Naive thymus-derived CD4-positive, alpha-beta T cell (primary cell): ENCODE measurements at regions of chr10 and their contacts with region 1.

Region 1: GRCh38 chr10:101031128-101031795 is at the starts of genes PDZD7 and SFXN3:
- DNase-seq: peak; percentile 93 to 98 (median 97)
- ATAC-seq: peak; percentile 88
- H3K4me3 ChIP-seq: peak within 1 kb of the TSS; percentile 99
- H3K4me3 Mint-ChIP-seq: peak within 1 kb of the TSS; percentile 85 to 99 (median 94)
- H3K27ac ChIP-seq: peak within 1 kb of the TSS; percentile 98
- H3K27ac Mint-ChIP-seq: peak within 1 kb of the TSS; percentile 75 to 97 (median 93)
- H3K4me1 ChIP-seq: peaks cover 12 to 14% of the 10 kb centered on the region in 2 donors
- H3K4me1 Mint-ChIP-seq: peaks cover 6 to 21% (median 16%) of the 10 kb centered on the region in 7 donors
- H3K27me3 ChIP-seq: no peaks in the 10 kb centered on the region
- H3K27me3 Mint-ChIP-seq: peaks cover 0 to 21% (median 0%) of the 10 kb centered on the region in 5 donors
- total RNA-seq, gene PDZD7: 0.65 to 2.8 (median 1.8) TPM
- total RNA-seq, gene SFXN3: 33.7 to 90.4 (median 48.4) TPM

Region 2: DNA sequence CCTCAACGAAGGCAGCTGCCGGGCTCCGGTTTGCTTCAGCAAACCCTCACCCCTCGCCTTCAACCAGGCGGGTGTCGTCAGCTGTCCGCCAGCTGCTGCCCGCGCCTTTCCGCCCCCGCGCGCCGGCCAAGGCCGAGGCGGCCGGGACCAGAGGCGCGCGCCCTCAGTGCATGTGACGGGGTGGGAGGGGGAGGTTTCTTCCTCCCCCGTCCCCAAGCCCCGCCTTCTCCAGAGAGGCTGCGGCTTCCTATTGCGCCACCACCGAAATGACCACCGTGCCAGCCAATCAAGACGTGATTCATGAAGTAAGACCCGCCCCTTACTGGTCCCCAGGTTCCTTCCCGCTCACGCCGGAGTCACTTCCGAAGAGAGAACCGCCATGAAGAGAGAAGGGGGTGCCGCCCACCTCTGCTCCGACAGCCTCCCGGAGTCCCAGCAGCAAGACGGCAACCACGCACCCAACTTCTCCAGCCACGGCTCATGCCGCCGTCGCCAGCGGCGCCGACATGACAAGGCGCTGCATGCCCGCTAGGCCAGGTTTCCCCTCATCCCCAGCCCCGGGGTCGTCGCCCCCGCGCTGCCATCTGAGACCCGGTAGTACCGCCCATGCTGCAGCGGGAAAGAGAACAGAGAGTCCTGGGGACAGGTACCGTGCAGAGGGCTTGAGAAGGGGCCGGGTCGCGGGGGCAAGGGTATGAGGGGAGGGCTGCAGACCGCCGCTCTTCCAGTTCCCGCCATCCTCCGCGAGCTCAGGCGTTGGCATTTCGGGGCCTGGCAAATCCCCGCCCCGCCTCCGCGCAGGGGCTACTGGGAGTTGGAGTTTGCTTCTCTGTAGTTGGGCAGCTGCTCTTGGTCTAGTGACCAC is 118.4 kb before region 1 on chr10 and contains the start of gene SLF2:
- CTCF ChIA-PET with region 1: no interaction called
- POLR2A ChIA-PET with region 1: interaction called, 4 read pairs
- intact Hi-C with region 1: loop called (anchors 1 to 5 kb)
- DNase-seq: peak; percentile 69 to 91 (median 88)
- ATAC-seq: peak; percentile 96
- H3K4me3 ChIP-seq: peak within 1 kb of the TSS; percentile 96
- H3K4me3 Mint-ChIP-seq: peak within 1 kb of the TSS; percentile 91 to 100 (median 99)
- H3K27ac ChIP-seq: peak within 1 kb of the TSS; percentile 89
- H3K27ac Mint-ChIP-seq: peak within 1 kb of the TSS; percentile 88 to 99 (median 97)
- H3K4me1 ChIP-seq: peaks cover 12 to 13% of the 10 kb centered on the region in 2 donors
- H3K4me1 Mint-ChIP-seq: peaks cover 22 to 63% (median 60%) of the 10 kb centered on the region in 7 donors
- H3K27me3 ChIP-seq: no peaks in the 10 kb centered on the region
- H3K27me3 Mint-ChIP-seq: no peaks in the 10 kb centered on the region
- total RNA-seq, gene SLF2: 20.1 to 43.7 (median 38.8) TPM

Region 3: DNA sequence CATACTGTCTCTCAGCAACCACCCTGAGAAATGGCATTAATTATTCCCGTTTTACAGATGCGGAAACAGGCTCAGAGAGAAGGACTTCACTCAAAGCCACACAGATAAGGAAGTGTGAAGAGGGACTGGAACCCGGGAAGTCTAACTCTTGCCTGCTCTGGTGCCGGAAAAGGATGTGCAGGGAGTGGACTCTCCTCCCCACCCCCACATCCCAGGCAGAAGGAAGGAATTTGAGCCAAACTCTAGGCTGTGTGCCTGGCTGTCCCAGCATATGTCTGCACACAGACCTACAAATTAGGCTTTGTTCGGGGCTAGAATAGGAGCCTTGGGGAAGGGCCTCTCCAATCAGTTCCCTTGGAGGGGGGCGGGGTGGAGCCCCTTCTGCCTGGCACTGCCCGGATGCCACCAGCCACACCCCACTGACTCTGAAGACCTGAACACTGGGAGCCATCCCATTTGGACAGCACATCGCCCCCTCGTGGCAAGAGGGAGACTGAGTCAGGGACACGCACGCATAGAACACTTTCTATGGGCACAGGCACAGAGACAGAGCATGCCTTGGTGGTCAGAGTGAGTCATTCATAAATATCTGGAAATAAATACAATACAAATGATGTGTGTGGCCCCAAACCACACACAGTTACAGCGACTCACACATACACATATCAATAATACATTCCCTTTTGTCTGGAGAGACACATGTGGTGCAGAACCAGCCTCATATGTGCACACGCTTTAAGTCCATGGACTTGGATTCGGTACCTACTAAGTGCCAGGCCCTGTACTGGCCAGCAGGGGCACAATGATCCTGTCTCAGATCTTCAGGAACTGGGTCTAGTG is 18.5 kb before region 1 on chr10:
- CTCF ChIA-PET with region 1: interaction called, 11 read pairs
- POLR2A ChIA-PET with region 1: interaction called, 3 read pairs
- intact Hi-C with region 1: loop called (anchors 1 kb)
- DNase-seq: peak; percentile 46 to 76 (median 63)
- ATAC-seq: peak; percentile 91
- H3K4me3 ChIP-seq: no peak overlapping the region
- H3K4me3 Mint-ChIP-seq: peak overlapping the region in 1 of 10 donors; percentile 24
- H3K27ac ChIP-seq: no peak overlapping the region
- H3K27ac Mint-ChIP-seq: peak overlapping the region in 3 of 9 donors; percentile 8 to 75 (median 41)
- H3K4me1 ChIP-seq: peaks cover 0 to 5% of the 10 kb centered on the region in 2 donors
- H3K4me1 Mint-ChIP-seq: peaks cover 9 to 21% (median 17%) of the 10 kb centered on the region in 7 donors
- H3K27me3 ChIP-seq: no peaks in the 10 kb centered on the region
- H3K27me3 Mint-ChIP-seq: peaks cover 22 to 39% (median 30%) of the 10 kb centered on the region in 5 donors

Region 4: GRCh38 chr10:101042667-101043355 is 11.5 kb after region 1 on chr10:
- CTCF ChIA-PET with region 1: interaction called, 30 read pairs
- POLR2A ChIA-PET with region 1: interaction called, 40 read pairs
- intact Hi-C with region 1: loop called (anchors 1 kb)
- DNase-seq: peak; percentile 49 to 86 (median 57)
- ATAC-seq: peak; percentile 87
- H3K4me3 ChIP-seq: peak overlapping the region; percentile 82
- H3K4me3 Mint-ChIP-seq: peak overlapping the region; percentile 86 to 99 (median 94)
- H3K27ac ChIP-seq: peak overlapping the region; percentile 67
- H3K27ac Mint-ChIP-seq: peak overlapping the region; percentile 81 to 96 (median 88)
- H3K4me1 ChIP-seq: peaks cover 5 to 14% of the 10 kb centered on the region in 2 donors
- H3K4me1 Mint-ChIP-seq: peaks cover 20 to 27% (median 24%) of the 10 kb centered on the region in 7 donors
- H3K27me3 ChIP-seq: no peaks in the 10 kb centered on the region
- H3K27me3 Mint-ChIP-seq: peaks cover 10 to 44% (median 21%) of the 10 kb centered on the region in 5 donors

Region 5: DNA sequence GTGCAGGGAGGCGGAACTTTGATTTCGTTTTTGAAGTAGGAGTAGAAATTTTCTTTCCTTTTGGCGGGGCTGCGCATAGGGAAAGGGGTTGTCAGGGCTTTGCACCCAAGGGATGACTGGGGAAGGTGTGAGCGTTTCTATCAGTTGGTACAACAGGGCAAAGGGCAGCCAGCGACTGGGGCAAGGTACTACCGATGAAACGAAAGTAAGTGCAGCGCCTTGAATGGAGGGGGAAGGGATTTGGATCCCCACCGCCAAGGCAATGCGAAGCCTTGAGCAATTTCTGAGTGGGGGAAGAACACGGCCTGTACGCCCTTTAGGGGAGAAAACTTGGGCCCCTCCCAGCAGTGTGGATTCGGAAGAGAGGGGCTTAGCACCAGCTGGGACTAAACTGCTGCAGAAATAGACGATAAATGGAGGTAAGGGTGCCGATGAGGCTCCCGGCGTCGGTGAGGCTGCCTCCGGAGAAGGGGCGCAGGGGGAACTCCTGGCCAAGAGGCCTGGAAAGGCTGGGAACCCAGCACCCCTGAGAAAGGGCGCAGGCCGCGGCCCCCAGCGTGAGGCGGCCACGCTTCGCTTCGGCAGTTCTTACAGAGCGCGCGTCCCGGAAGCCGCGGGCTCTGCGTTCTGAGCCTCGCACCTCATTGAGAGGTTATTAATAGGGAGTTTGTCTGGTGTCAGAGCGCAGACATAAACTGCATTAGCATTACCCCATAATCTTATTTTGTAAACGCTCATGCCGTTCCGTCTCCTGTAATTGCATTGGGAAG is 89.8 kb after region 1 on chr10:
- CTCF ChIA-PET with region 1: interaction called, 4 read pairs
- POLR2A ChIA-PET with region 1: no interaction called
- intact Hi-C with region 1: loop called in 1 of 2 experiments (anchors 5 kb)
- DNase-seq: peak in 8 of 9 donors; percentile 35 to 58 (median 47)
- ATAC-seq: peak; percentile 84
- H3K4me3 ChIP-seq: peak overlapping the region; percentile 87
- H3K4me3 Mint-ChIP-seq: peak overlapping the region; percentile 88 to 100 (median 96)
- H3K27ac ChIP-seq: peak overlapping the region; percentile 55
- H3K27ac Mint-ChIP-seq: peak overlapping the region; percentile 83 to 97 (median 90)
- H3K4me1 ChIP-seq: peaks cover 6 to 21% of the 10 kb centered on the region in 2 donors
- H3K4me1 Mint-ChIP-seq: peaks cover 21 to 32% (median 30%) of the 10 kb centered on the region in 7 donors
- H3K27me3 ChIP-seq: no peaks in the 10 kb centered on the region
- H3K27me3 Mint-ChIP-seq: peaks cover 41 to 86% (median 47%) of the 10 kb centered on the region in 5 donors

Region 6: GRCh38 chr10:101161494-101162299 is 130.4 kb after region 1 on chr10:
- CTCF ChIA-PET with region 1: no interaction called
- POLR2A ChIA-PET with region 1: no interaction called
- intact Hi-C with region 1: no loop called
- DNase-seq: peak; percentile 45 to 71 (median 65)
- ATAC-seq: peak; percentile 96
- H3K4me3 ChIP-seq: no peak overlapping the region
- H3K4me3 Mint-ChIP-seq: peak overlapping the region in 5 of 10 donors; percentile 20 to 51 (median 30)
- H3K27ac ChIP-seq: no peak overlapping the region
- H3K27ac Mint-ChIP-seq: peak overlapping the region in 1 of 9 donors; percentile 26
- H3K4me1 ChIP-seq: no peaks in the 10 kb centered on the region
- H3K4me1 Mint-ChIP-seq: peaks cover 9 to 16% (median 12%) of the 10 kb centered on the region in 7 donors
- H3K27me3 ChIP-seq: peaks cover 6 to 15% of the 10 kb centered on the region in 2 donors
- H3K27me3 Mint-ChIP-seq: peaks cover 49 to 78% (median 70%) of the 10 kb centered on the region in 5 donors

Region 7: DNA sequence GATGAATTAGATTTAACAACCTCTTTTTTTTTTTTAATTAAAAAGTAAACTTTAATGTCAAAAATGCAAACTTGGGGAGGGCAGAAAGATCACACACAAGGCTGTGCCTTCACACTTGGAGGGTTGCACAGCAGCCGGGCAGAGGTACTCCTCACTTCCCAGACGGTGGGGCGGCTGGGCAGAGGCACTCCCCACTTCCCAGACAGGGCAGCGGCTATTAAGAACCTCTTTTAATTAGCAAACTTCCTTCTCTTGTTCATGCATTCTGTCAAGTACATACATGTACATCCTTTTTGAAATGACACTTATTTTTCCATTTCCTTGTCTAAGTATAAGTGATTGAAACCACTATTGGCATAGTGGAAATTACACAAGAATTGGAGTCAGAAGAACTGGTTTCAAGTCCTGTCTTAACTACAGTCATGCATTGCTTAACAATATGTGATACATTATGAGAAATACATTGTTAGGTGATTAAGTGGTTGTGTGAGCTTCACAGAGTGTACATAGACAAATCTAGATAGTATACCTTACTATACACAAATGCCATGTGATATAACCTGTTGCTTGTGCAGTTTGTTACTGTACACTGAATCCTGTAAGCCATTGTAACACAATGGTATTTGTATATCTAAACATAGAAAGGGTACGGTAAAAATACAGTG is 349.2 kb after region 1 on chr10:
- CTCF ChIA-PET with region 1: no interaction called
- POLR2A ChIA-PET with region 1: no interaction called
- intact Hi-C with region 1: no loop called
- DNase-seq: no peak
- ATAC-seq: no peak
- H3K4me3 ChIP-seq: no peak overlapping the region
- H3K4me3 Mint-ChIP-seq: no peak overlapping the region
- H3K27ac ChIP-seq: no peak overlapping the region
- H3K27ac Mint-ChIP-seq: no peak overlapping the region
- H3K4me1 ChIP-seq: no peaks in the 10 kb centered on the region
- H3K4me1 Mint-ChIP-seq: peaks cover 6 to 48% (median 30%) of the 10 kb centered on the region in 7 donors
- H3K27me3 ChIP-seq: no peaks in the 10 kb centered on the region
- H3K27me3 Mint-ChIP-seq: no peaks in the 10 kb centered on the region

Region 8: GRCh38 chr10:102055647-102056419 is 1024.6 kb after region 1 on chr10 and contains the start of gene ARMH3:
- CTCF ChIA-PET with region 1: no interaction called
- POLR2A ChIA-PET with region 1: no interaction called
- intact Hi-C with region 1: loop called in 1 of 2 experiments (anchors 10 kb)
- DNase-seq: peak; percentile 72 to 90 (median 87)
- ATAC-seq: peak; percentile 98
- H3K4me3 ChIP-seq: peak within 1 kb of the TSS; percentile 92
- H3K4me3 Mint-ChIP-seq: peak within 1 kb of the TSS; percentile 89 to 98 (median 94)
- H3K27ac ChIP-seq: peak within 1 kb of the TSS; percentile 87
- H3K27ac Mint-ChIP-seq: peak within 1 kb of the TSS; percentile 76 to 97 (median 92)
- H3K4me1 ChIP-seq: peaks cover 18 to 20% of the 10 kb centered on the region in 2 donors
- H3K4me1 Mint-ChIP-seq: peaks cover 25 to 50% (median 42%) of the 10 kb centered on the region in 7 donors
- H3K27me3 ChIP-seq: no peaks in the 10 kb centered on the region
- H3K27me3 Mint-ChIP-seq: no peaks in the 10 kb centered on the region
- total RNA-seq, gene ARMH3: 26.7 to 34.0 (median 28.8) TPM